HCT116 (cell line): ENCODE measurements at regions of chr17 and their contacts with region 1.

Region 1: DNA sequence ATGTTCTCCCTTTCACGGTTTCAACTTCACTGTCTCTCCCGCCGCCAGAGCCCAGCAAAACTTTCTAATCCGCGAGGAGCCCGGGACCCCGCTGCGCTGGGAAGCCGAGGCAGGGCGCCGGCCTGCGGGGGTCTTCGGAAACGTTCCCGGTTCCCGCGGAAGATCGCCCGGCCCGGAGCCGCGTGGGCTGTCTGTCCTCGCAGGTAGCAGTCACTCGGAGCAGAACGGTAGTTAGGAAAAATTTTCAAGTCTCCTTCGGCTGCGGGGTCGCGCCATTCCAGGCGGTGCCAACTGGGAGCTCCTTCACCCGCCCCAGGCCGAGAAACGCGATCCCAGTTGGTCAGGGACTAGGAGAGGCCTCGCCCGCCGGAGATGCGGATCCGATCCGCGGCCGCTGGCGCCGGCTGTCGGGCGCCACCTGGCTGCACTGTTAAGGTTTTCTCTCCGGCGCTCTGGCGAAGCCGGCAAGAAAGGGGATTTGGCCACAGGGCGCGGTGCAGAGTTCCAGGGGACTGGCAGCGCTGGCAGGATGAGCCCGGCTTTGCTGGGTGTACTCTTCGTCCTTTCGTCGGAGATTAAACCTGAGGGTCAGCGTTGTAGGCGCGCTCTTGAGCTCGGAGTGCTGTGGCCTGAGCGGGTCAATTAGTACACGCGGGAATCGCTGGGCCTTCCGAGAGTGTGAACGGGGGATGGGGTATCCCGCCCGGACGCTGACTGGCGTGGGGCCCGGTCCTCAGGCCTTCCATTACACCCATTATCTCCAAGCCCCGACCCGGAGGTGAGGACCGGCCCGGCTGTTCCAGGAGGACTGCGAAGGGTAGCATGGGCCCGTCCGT is 135.4 kb downstream of the KCNJ12 start:
- DNase-seq: peak; percentile 61
- ATAC-seq: peak; percentile 95
- H3K4me3 ChIP-seq: peak overlapping the region in 1 of 2 experiments; percentile 28; a peak in 2 of 4 replicates
- H3K27ac ChIP-seq: no peak overlapping the region
- H3K4me1 ChIP-seq: peaks cover 2 to 14% of the 10 kb centered on the region in 2 experiments; a peak in 2 of 4 replicates
- H3K27me3 ChIP-seq: no peaks in the 10 kb centered on the region
- CTCF ChIP-seq: peak; percentile 71 to 78 (median 76)
- POLR2A ChIP-seq: no peak
- RAD21 ChIP-seq: peak; percentile 70

Region 2: DNA sequence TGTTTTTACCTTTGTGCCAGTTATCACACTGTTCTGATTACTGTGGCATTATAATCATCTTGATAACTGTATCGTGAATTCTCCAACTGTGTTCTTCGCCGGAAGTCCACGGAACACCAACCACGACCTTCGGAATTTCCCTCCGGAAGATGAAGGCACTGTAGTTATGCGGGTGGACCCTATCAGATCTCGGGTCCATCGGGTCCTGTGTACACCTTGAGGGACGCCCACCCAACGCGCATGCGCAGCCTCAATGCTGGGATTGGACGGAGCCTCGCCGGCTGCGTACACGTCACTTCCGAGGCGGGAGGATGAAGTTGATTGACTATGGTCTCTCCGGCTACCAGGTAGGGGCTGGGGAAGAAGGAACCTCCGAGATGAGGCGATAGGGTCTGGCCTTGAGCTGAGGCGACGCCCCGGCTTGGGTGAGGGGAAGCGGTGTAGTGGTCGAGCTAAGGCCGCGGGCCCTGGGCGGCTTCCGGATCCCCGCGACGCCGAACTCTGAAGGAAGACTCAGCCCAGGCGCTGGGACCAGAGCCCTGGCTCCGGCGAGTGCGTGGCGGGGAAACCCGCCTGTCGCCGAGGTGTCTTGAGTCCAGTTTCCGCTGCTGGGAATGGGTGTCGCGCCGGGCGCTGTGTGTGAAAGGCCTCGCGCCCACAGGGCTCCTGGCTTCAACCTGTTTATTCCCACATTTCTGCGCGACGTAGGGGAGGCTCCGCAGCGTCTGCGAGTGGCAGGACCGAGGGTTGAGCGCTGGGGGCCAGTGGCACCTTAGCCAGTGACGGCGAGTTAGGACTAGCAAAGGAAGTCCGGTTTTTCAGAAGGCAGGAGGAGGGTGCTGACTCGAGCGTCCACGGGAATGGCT is 384.7 kb before region 1 on chr17 and contains the start of gene DHRS7B:
- CTCF ChIA-PET with region 1: interaction called, 17 read pairs
- POLR2A ChIA-PET with region 1: no interaction called
- RAD21 ChIA-PET with region 1: no interaction called
- intact Hi-C with region 1: loop called (anchors 2 kb)
- DNase-seq: peak; percentile 95
- ATAC-seq: peak; percentile 94
- H3K4me3 ChIP-seq: peak within 1 kb of the TSS; percentile 76 to 94
- H3K27ac ChIP-seq: peak within 1 kb of the TSS; percentile 64
- H3K4me1 ChIP-seq: peaks cover 8 to 16% of the 10 kb centered on the region in 2 experiments
- H3K27me3 ChIP-seq: no peaks in the 10 kb centered on the region
- CTCF ChIP-seq: no peak
- POLR2A ChIP-seq: peak; percentile 81
- RAD21 ChIP-seq: no peak
- total RNA-seq, gene DHRS7B: 19.6 TPM

Region 3: GRCh38 chr17:21275579-21276263 is 235.9 kb before region 1 on chr17:
- CTCF ChIA-PET with region 1: interaction called, 7 read pairs
- POLR2A ChIA-PET with region 1: no interaction called
- RAD21 ChIA-PET with region 1: no interaction called
- intact Hi-C with region 1: loop called (anchors 2 kb)
- DNase-seq: no peak
- ATAC-seq: peak; percentile 88
- H3K4me3 ChIP-seq: peak overlapping the region; percentile 52 to 57
- H3K27ac ChIP-seq: peak overlapping the region; percentile 65; the same call in 1 of the 2 replicates
- H3K4me1 ChIP-seq: peaks cover 23 to 52% of the 10 kb centered on the region in 2 experiments
- H3K27me3 ChIP-seq: no peaks in the 10 kb centered on the region
- CTCF ChIP-seq: no peak
- POLR2A ChIP-seq: peak; percentile 73
- RAD21 ChIP-seq: no peak

Region 4: GRCh38 chr17:21318439-21318838 is 193.1 kb before region 1 on chr17:
- CTCF ChIA-PET with region 1: no interaction called
- POLR2A ChIA-PET with region 1: no interaction called
- RAD21 ChIA-PET with region 1: no interaction called
- intact Hi-C with region 1: loop called (anchors 10 kb)
- DNase-seq: no peak
- ATAC-seq: no peak
- H3K4me3 ChIP-seq: no peak overlapping the region
- H3K27ac ChIP-seq: no peak overlapping the region
- H3K4me1 ChIP-seq: peaks cover 0 to 11% of the 10 kb centered on the region in 2 experiments; a peak in 1 of 4 replicates
- H3K27me3 ChIP-seq: no peaks in the 10 kb centered on the region
- CTCF ChIP-seq: no peak
- POLR2A ChIP-seq: no peak
- RAD21 ChIP-seq: no peak

Region 5: DNA sequence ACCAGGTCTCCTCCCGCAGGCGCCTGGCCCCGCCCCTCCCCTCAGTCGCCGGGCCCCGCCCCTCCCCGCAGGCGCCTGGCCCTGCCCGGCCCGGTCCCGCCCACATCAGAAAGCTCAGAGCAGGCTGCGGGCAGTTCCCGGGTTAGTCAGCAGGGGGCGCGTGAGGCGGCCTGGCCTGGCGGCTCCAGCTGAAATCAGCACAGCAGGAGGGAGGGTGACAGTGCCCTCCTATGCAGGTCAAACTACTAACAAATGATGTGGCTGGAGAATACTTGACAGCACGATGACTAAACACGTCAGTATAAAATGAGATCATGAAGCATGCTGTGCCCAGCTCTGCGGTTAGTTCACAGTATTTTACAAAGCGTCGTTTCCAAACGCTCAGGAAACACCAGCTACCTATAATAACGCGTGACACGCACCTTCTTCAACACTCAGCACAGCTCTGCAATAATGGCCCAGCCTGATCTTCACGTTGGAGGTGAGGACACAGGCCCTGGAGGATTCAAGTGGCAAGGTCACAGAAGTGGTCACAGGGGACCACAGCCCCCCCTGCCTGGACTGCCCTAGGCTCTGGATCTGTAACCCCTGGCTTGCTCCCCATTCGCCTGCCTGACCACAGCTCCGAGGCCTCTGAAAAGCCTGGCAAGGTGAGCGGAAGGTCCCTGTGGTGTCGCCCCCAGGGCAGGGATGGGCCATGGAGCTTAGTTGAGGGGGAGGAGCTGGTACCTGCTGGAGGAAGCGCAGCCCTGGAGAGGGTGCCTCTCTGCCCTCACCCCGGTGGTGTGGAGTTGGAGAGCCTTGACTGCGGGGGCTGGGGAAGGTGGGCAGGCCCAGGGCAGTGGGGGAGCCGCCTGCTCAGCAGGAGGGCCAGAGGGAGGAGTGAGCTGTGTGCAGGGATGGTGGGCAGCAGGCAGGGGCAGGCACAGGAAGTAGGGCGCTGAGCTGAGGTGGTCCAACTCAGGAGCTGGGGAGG is 54.2 kb before region 1 on chr17:
- CTCF ChIA-PET with region 1: interaction called, 51 read pairs
- POLR2A ChIA-PET with region 1: interaction called, 3 read pairs
- RAD21 ChIA-PET with region 1: interaction called, 6 to 10 read pairs
- intact Hi-C with region 1: loop called (anchors 1 kb)
- DNase-seq: peak; percentile 69
- ATAC-seq: peak; percentile 95
- H3K4me3 ChIP-seq: no peak overlapping the region
- H3K27ac ChIP-seq: no peak overlapping the region
- H3K4me1 ChIP-seq: peaks cover 4 to 13% of the 10 kb centered on the region in 2 experiments; a peak in 3 of 4 replicates
- H3K27me3 ChIP-seq: 0 out of 2 replicates have a peak, but pooled peaks cover 5% of the 10 kb centered on the region
- CTCF ChIP-seq: peak; percentile 81 to 94 (median 89)
- POLR2A ChIP-seq: no peak
- RAD21 ChIP-seq: peak; percentile 74

Region 6: DNA sequence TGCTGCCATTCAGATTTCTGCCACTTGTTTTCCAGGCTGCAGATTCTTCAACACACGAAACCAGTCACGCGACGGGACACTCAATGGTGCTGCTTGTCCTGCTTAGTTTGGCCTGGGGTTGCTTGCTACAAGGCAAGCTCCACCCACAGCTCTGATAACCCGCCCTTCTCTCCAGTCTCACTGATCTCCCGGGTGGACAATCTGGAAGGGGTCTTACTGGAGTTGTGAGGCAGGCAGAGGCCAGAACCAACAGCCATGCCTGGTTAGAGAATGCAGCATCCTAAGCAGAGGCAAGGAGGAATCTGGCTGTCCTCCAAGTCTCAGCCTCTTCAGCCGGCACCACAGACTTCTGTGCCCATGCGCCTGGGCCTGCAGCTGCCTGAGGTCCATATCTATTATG is 16.3 kb before region 1 on chr17:
- CTCF ChIA-PET with region 1: no interaction called
- POLR2A ChIA-PET with region 1: no interaction called
- RAD21 ChIA-PET with region 1: no interaction called
- intact Hi-C with region 1: no loop called
- DNase-seq: no peak
- ATAC-seq: no peak; the same call in 1 of the 2 replicates
- H3K4me3 ChIP-seq: no peak overlapping the region
- H3K27ac ChIP-seq: no peak overlapping the region
- H3K4me1 ChIP-seq: no peaks in the 10 kb centered on the region
- H3K27me3 ChIP-seq: peaks cover 10% of the 10 kb centered on the region; the same call in 1 of the 2 replicates
- CTCF ChIP-seq: no peak
- POLR2A ChIP-seq: no peak
- RAD21 ChIP-seq: no peak

Region 7: DNA sequence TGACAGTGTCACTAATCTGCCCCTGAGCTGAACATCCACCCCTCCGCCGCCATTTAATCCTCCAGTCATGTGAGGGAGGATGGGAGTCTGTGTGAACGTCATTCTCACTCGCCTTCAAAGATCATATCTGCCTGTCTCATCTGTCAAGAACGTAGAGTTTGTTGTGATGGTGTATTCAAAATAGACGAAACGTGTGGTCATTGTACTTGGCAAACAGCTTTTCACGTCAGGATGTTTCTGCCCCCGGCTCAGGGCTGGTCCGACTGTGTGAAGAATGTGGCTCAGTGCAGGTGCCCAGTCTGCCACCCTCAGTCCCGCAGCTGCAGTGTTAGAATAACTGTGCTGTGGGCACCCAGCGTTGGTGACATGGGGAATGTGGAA is 12.6 kb after region 1 on chr17:
- CTCF ChIA-PET with region 1: interaction called, 13 read pairs
- POLR2A ChIA-PET with region 1: no interaction called
- RAD21 ChIA-PET with region 1: no interaction called
- intact Hi-C with region 1: no loop called
- DNase-seq: no peak
- ATAC-seq: no peak
- H3K4me3 ChIP-seq: no peak overlapping the region
- H3K27ac ChIP-seq: no peak overlapping the region
- H3K4me1 ChIP-seq: no peaks in the 10 kb centered on the region
- H3K27me3 ChIP-seq: no peaks in the 10 kb centered on the region
- CTCF ChIP-seq: no peak
- POLR2A ChIP-seq: no peak
- RAD21 ChIP-seq: no peak